AG04450 (cell line): ENCODE measurements at regions of chr20 and their contacts with region 1.

Region 1: DNA sequence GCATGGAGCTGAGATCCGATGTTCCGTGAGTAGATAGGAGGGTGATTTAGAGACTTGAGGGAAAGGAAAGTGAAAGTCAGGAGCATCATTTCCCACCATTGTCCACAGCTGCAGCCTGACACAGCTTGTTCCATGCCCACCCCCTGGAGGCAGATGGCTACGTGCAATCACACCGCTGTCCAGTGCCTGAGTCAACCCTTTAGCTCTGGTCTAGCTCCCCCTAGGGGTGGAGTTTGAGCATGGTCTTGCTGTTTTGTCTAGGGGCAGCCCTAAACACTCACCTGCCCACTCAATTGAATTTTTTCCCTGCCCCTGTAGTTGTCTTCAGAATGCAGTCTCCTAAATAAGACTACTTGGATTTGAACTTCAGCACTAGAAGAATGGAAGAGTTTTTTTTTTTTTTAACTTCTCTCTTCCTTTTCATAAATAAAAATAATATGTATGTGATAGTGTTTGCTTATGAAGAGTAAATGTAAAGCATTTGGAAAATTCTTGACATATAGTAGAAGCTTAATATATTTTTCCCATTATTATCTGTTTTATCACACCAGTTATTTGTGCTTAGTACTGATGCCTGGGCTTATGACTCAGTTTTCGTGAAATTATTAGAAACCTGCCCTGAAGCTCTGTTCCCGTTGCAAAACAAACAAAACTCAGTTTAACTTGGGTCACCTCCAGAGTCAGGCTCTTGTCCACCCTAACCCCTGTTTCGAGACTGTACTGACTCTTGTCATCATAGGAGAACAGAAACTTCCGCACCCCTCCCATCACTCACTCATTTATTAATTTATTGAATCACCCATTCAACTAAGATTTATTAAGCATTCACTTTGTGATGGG is 814.8 kb downstream of the MAFB start:
- DNase-seq: peak; percentile 73
- H3K4me3 ChIP-seq: no peak overlapping the region
- H3K27ac ChIP-seq: no peak overlapping the region
- H3K27me3 ChIP-seq: peaks cover 4% of the 10 kb centered on the region
- CTCF ChIP-seq: peak; percentile 94

Region 2: DNA sequence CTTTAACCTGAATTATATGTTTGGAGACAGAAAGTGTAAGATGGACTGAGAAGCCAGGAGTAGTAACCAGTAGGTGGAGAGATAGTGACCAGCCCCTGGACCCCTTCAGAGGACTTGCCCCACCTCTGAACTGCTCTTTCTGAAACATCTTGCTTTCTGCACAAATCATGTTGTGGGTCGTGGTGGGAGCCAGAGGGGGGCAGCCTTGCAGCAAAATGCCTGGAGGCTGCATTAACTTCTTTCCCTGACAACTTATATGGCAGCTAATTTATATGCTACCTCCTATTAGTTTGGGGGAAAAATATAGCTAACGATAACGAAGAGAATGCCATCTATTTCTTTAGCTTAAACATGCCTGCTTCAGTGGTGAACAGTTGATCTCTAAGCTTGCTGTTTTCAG is 45.0 kb before region 1 on chr20:
- CTCF ChIA-PET with region 1: interaction called, 126 read pairs
- POLR2A ChIA-PET with region 1: no interaction called
- DNase-seq: no peak
- H3K4me3 ChIP-seq: no peak overlapping the region
- H3K27ac ChIP-seq: no peak overlapping the region
- H3K27me3 ChIP-seq: peaks cover 5% of the 10 kb centered on the region
- CTCF ChIP-seq: peak; percentile 79

Region 3: GRCh38 chr20:39849664-39850063 is 24.6 kb before region 1 on chr20:
- CTCF ChIA-PET with region 1: interaction called, 42 read pairs
- POLR2A ChIA-PET with region 1: no interaction called
- DNase-seq: peak; percentile 83
- H3K4me3 ChIP-seq: no peak overlapping the region
- H3K27ac ChIP-seq: peak overlapping the region; percentile 43
- H3K27me3 ChIP-seq: peaks cover 1% of the 10 kb centered on the region
- CTCF ChIP-seq: no peak

Region 4: DNA sequence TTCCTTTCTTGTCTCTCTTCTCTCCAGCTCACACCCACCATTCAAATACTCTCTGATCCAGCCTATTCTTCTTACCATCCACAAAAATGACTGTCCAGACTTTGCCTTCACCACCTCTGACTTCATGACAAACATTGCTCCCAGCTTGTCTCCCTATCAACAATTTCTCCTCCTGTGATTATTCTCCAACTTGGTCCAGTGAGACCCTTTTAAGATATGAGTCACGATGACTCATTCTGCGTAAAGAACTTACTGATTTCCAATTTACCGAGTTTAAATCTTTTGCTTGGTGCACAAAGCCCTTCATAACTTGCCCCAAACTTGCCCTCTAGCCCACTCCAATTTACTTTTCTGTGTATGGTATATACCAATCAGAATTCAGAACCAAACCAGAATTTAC is 18.5 kb before region 1 on chr20:
- CTCF ChIA-PET with region 1: interaction called, 42 read pairs
- POLR2A ChIA-PET with region 1: no interaction called
- DNase-seq: no peak
- H3K4me3 ChIP-seq: no peak overlapping the region
- H3K27ac ChIP-seq: no peak overlapping the region
- H3K27me3 ChIP-seq: no peaks in the 10 kb centered on the region
- CTCF ChIP-seq: no peak

Region 5: GRCh38 chr20:39861381-39861780 is 12.9 kb before region 1 on chr20:
- CTCF ChIA-PET with region 1: interaction called, 19 read pairs
- POLR2A ChIA-PET with region 1: no interaction called
- DNase-seq: no peak
- H3K4me3 ChIP-seq: no peak overlapping the region
- H3K27ac ChIP-seq: no peak overlapping the region
- H3K27me3 ChIP-seq: no peaks in the 10 kb centered on the region
- CTCF ChIP-seq: no peak

Region 6: GRCh38 chr20:39892983-39893685 is 18.9 kb after region 1 on chr20:
- CTCF ChIA-PET with region 1: interaction called, 11 read pairs
- POLR2A ChIA-PET with region 1: no interaction called
- DNase-seq: peak; percentile 60
- H3K4me3 ChIP-seq: no peak overlapping the region
- H3K27ac ChIP-seq: no peak overlapping the region
- H3K27me3 ChIP-seq: no peaks in the 10 kb centered on the region
- CTCF ChIP-seq: peak; percentile 36

Region 7: DNA sequence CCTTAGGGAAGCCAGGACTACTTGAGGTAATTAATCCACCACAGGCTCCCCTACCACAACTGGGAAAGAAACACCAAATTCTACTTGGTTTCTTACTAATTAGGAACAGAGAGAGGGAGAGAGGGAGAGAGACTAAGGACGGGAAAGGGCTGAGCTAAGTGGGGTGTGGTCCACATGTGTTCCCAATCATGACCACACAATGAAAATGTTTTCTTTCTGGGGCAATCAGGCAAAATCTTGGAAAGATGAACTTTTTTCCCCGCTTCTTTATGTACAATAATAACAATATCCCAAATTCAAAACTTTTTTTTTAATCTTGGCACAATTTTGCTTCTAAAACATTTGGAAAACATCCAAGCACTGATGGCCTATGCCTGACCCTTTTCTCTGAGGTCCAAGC is 80.4 kb after region 1 on chr20:
- CTCF ChIA-PET with region 1: no interaction called
- POLR2A ChIA-PET with region 1: no interaction called
- DNase-seq: no peak
- H3K4me3 ChIP-seq: no peak overlapping the region
- H3K27ac ChIP-seq: no peak overlapping the region
- H3K27me3 ChIP-seq: no peaks in the 10 kb centered on the region
- CTCF ChIP-seq: no peak

Region 8: GRCh38 chr20:40197691-40198090 is 323.4 kb after region 1 on chr20:
- CTCF ChIA-PET with region 1: no interaction called
- POLR2A ChIA-PET with region 1: no interaction called
- DNase-seq: no peak
- H3K4me3 ChIP-seq: no peak overlapping the region
- H3K27ac ChIP-seq: no peak overlapping the region
- H3K27me3 ChIP-seq: no peaks in the 10 kb centered on the region
- CTCF ChIP-seq: no peak